Caco-2 (cell line): ENCODE measurements at regions of chr3 and their contacts with region 1.

Region 1: DNA sequence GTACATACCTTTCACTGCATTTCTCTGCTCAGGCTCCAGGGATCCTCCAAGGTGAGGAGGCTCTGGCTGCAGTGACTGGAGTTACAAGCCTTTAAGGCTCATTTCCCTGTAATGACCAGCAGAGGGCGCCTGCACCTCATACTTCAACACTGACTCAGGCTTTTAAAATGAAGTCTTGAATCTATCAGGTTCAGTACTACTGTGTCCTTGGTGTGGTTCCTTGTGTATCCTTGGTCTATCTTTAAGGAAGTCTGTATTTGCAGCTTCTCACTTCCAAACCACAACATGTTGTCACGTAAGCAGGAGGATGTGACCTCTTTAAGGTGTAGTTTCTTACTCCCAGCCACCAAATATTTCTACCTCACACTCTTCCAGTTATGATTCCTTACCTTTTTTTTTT is 122.5 kb upstream of the ZBED2 start:
- DNase-seq: peak; percentile 76
- H3K4me3 ChIP-seq: no peak overlapping the region
- H3K4me3 Mint-ChIP-seq: no peak overlapping the region
- H3K27ac Mint-ChIP-seq: peak overlapping the region; percentile 29
- H3K4me1 ChIP-seq: no peaks in the 10 kb centered on the region
- H3K4me1 Mint-ChIP-seq: peaks cover 12% of the 10 kb centered on the region
- H3K27me3 ChIP-seq: no peaks in the 10 kb centered on the region
- H3K27me3 Mint-ChIP-seq: no peaks in the 10 kb centered on the region
- CTCF ChIP-seq: peak; percentile 85 to 90

Region 2: GRCh38 chr3:111454538-111454937 is 263.1 kb before region 1 on chr3:
- CTCF ChIA-PET with region 1: no interaction called
- POLR2A ChIA-PET with region 1: no interaction called
- intact Hi-C with region 1: no loop called
- DNase-seq: no peak
- H3K4me3 ChIP-seq: no peak overlapping the region
- H3K4me3 Mint-ChIP-seq: no peak overlapping the region
- H3K27ac Mint-ChIP-seq: no peak overlapping the region
- H3K4me1 ChIP-seq: no peaks in the 10 kb centered on the region
- H3K4me1 Mint-ChIP-seq: no peaks in the 10 kb centered on the region
- H3K27me3 ChIP-seq: no peaks in the 10 kb centered on the region
- H3K27me3 Mint-ChIP-seq: peaks cover under 1% of the 10 kb centered on the region
- CTCF ChIP-seq: no peak

Region 3: GRCh38 chr3:111668912-111669488 is 48.6 kb before region 1 on chr3:
- CTCF ChIA-PET with region 1: interaction called, 51 read pairs
- POLR2A ChIA-PET with region 1: no interaction called
- intact Hi-C with region 1: loop called (anchors 1 kb)
- DNase-seq: peak in 1 of 2 experiments; percentile 30
- H3K4me3 ChIP-seq: no peak overlapping the region
- H3K4me3 Mint-ChIP-seq: no peak overlapping the region
- H3K27ac Mint-ChIP-seq: no peak overlapping the region
- H3K4me1 ChIP-seq: peaks cover 4% of the 10 kb centered on the region; the same call in 1 of the 2 replicates
- H3K4me1 Mint-ChIP-seq: peaks cover 18% of the 10 kb centered on the region
- H3K27me3 ChIP-seq: no peaks in the 10 kb centered on the region
- H3K27me3 Mint-ChIP-seq: no peaks in the 10 kb centered on the region
- CTCF ChIP-seq: peak; percentile 46 to 70

Region 4: GRCh38 chr3:111735271-111735758 is 17.7 kb after region 1 on chr3:
- CTCF ChIA-PET with region 1: interaction called, 3 read pairs
- POLR2A ChIA-PET with region 1: interaction called, 3 read pairs
- intact Hi-C with region 1: loop called (anchors 1 kb)
- DNase-seq: peak; percentile 84 to 85
- H3K4me3 ChIP-seq: no peak overlapping the region
- H3K4me3 Mint-ChIP-seq: peak overlapping the region; percentile 79
- H3K27ac Mint-ChIP-seq: peak overlapping the region; percentile 78
- H3K4me1 ChIP-seq: peaks cover 57% of the 10 kb centered on the region
- H3K4me1 Mint-ChIP-seq: peaks cover 51% of the 10 kb centered on the region
- H3K27me3 ChIP-seq: no peaks in the 10 kb centered on the region
- H3K27me3 Mint-ChIP-seq: no peaks in the 10 kb centered on the region
- CTCF ChIP-seq: no peak

Region 5: GRCh38 chr3:111895079-111895478 is 177.5 kb after region 1 on chr3:
- CTCF ChIA-PET with region 1: no interaction called
- POLR2A ChIA-PET with region 1: no interaction called
- intact Hi-C with region 1: loop called (anchors 1 kb)
- DNase-seq: no peak
- H3K4me3 ChIP-seq: no peak overlapping the region
- H3K4me3 Mint-ChIP-seq: no peak overlapping the region
- H3K27ac Mint-ChIP-seq: no peak overlapping the region
- H3K4me1 ChIP-seq: no peaks in the 10 kb centered on the region
- H3K4me1 Mint-ChIP-seq: no peaks in the 10 kb centered on the region
- H3K27me3 ChIP-seq: no peaks in the 10 kb centered on the region
- H3K27me3 Mint-ChIP-seq: no peaks in the 10 kb centered on the region
- CTCF ChIP-seq: peak; percentile 20 to 39

Region 6: DNA sequence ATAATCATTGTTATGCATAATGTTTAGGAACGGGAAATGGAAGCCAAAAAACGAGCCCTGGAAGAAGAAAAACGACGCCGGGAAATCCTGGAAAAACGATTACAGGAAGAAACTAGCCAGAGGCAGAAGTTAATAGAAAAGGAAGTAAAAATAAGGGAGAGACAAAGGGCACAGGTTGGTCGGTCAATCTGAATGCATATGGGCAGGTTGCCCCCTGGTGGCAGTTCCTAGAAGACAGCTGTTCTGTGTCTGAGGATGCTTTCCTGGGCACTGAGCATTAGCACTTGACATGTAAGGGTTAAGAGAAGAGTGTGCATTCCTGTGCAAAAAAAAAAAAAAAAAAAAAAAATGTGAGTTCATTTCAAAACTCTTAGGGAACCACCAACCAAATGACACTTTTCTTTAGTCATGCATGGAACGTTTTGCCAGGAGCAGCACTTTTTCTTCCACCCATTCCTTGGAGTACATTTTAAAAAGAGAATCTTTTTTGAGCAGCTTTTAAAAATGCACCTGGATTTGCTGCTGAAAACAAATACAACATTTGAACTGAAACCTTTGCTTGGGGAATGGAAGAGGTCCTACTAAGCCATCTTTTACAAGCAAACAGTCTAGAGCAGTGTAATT is 250.2 kb after region 1 on chr3:
- CTCF ChIA-PET with region 1: interaction called, 20 read pairs
- POLR2A ChIA-PET with region 1: no interaction called
- intact Hi-C with region 1: loop called (anchors 1 kb)
- DNase-seq: peak; percentile 80 to 86
- H3K4me3 ChIP-seq: no peak overlapping the region
- H3K4me3 Mint-ChIP-seq: no peak overlapping the region
- H3K27ac Mint-ChIP-seq: peak overlapping the region; percentile 0
- H3K4me1 ChIP-seq: peaks cover 6% of the 10 kb centered on the region
- H3K4me1 Mint-ChIP-seq: peaks cover 12% of the 10 kb centered on the region
- H3K27me3 ChIP-seq: no peaks in the 10 kb centered on the region
- H3K27me3 Mint-ChIP-seq: no peaks in the 10 kb centered on the region
- CTCF ChIP-seq: peak; percentile 74 to 88